Sciatic nerve (tissue), 2 donors: ENCODE measurements at regions of chr6 and their contacts with region 1.

Region 1: GRCh38 chr6:129708836-129709768 is 875 bp downstream of the ARHGAP18 start:
- DNase-seq: no peak
- ATAC-seq: peak; percentile 85

Region 2: DNA sequence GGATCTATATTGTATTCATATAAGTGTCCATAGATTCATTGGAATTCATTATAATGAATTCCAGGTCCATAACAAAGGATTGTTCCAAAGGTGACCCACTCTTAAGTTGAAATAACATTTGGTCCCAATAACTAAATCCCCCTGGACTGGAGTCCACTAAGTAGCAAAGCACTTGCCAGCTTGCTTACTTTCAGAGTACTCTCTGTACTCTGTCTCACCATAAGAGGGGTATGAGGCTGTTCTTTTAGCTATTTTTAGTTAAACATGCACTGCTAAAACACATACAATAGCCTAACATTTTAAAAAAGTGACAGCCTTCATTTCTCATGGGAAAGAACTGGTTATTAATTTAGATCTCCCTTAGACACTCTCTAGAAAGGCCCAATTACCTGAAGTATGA is 17.5 kb after region 1 on chr6:
- intact Hi-C with region 1: loop called (anchors 1 kb)
- DNase-seq: no peak
- ATAC-seq: no peak